ENCODE measurements at regions of chr2 and their contacts with region 1.

Region 1: DNA sequence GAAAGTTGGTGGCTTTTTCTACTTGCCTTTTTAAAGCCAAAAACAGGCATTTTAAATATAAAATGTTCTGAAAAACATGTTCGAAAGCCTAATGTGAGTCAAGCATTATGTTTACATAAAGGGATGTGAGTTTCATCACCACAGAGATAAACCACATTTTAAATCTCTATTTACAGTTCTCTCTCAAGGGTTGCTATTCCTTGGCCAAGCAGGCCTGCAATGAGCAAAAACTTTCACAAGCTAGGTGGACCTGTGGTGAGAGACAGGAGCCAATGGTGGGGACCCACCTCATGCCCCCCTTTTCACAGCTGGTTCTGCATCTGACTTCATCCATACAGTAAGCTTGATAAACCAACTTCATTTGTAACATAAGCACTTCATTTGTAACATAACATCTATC is 65.1 kb downstream of the CUL3 start:
- DNase-seq: peak; percentile 67
- ATAC-seq: peak; percentile 80
- H3K4me3 Mint-ChIP-seq: no peak overlapping the region
- H3K27ac Mint-ChIP-seq: peak overlapping the region; percentile 72
- H3K4me1 Mint-ChIP-seq: peaks cover 66% of the 10 kb centered on the region
- H3K27me3 Mint-ChIP-seq: no peaks in the 10 kb centered on the region

Region 2: GRCh38 chr2:224308272-224308911 is 211.7 kb before region 1 on chr2:
- CTCF ChIA-PET with region 1: no interaction called
- POLR2A ChIA-PET with region 1: no interaction called
- intact Hi-C with region 1: no loop called
- DNase-seq: no peak
- ATAC-seq: no peak
- H3K4me3 Mint-ChIP-seq: no peak overlapping the region
- H3K27ac Mint-ChIP-seq: no peak overlapping the region
- H3K4me1 Mint-ChIP-seq: peaks cover 3% of the 10 kb centered on the region
- H3K27me3 Mint-ChIP-seq: peaks cover 14% of the 10 kb centered on the region

Region 3: GRCh38 chr2:224561234-224562005 is 41.4 kb after region 1 on chr2:
- CTCF ChIA-PET with region 1: interaction called, 13 read pairs
- POLR2A ChIA-PET with region 1: no interaction called
- intact Hi-C with region 1: loop called (anchors 2 to 5 kb)
- DNase-seq: no peak
- ATAC-seq: peak; percentile 87
- H3K4me3 Mint-ChIP-seq: no peak overlapping the region
- H3K27ac Mint-ChIP-seq: no peak overlapping the region
- H3K4me1 Mint-ChIP-seq: peaks cover 34% of the 10 kb centered on the region
- H3K27me3 Mint-ChIP-seq: no peaks in the 10 kb centered on the region